ENCODE measurements at regions of chr6 and their contacts with region 1.

Region 1: GRCh38 chr6:30821862-30822782 is 62.2 kb upstream of the DDR1 start:
- DNase-seq: no peak
- ATAC-seq: no peak

Region 2: GRCh38 chr6:30748851-30749558 is 73.1 kb before region 1 on chr6:
- intact Hi-C with region 1: loop called in 1 of 2 experiments (anchors 5 kb)
- DNase-seq: no peak
- ATAC-seq: peak; percentile 27

Region 3: GRCh38 chr6:30935018-30935417 is 112.9 kb after region 1 on chr6:
- intact Hi-C with region 1: no loop called
- DNase-seq: no peak
- ATAC-seq: no peak

Measured in left colon (tissue), 2 donors.